ENCODE measurements at regions of chr2 and their contacts with region 1.

Region 1: GRCh38 chr2:200811336-200812121 is at the start of gene BZW1:
- DNase-seq: peak; percentile 99
- total RNA-seq, gene BZW1: 99.3 TPM

Region 2: DNA sequence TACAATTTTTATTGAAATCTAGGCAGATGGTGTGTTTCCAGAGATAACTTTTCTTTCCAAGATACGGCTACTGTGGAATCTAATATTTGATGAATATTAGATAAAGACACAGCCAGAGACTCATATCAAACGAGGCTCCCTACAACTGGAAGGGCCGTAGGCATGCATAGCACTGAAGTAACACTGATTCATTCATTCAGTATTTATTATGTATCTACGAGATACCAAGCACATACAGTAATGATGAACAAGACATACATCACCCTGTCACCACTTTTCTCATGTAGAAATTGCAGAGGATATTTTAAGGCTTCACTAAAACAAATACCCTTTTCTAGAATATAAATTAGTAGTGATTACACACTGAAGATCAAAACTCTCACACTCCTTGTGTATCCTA is 376.1 kb before region 1 on chr2:
- intact Hi-C with region 1: no loop called
- DNase-seq: no peak

Region 3: GRCh38 chr2:200713003-200713703 is 98.4 kb before region 1 on chr2:
- intact Hi-C with region 1: loop called (anchors 1 kb)
- DNase-seq: peak; percentile 93

Region 4: GRCh38 chr2:200742426-200742825 is 69.1 kb before region 1 on chr2:
- intact Hi-C with region 1: loop called (anchors 2 kb)
- DNase-seq: peak; percentile 82

Region 5: GRCh38 chr2:200864176-200864976 is 52.8 kb after region 1 on chr2 and contains the start of gene CLK1:
- intact Hi-C with region 1: loop called (anchors 1 kb)
- DNase-seq: peak; percentile 99
- total RNA-seq, gene CLK1: 58.3 TPM

Region 6: DNA sequence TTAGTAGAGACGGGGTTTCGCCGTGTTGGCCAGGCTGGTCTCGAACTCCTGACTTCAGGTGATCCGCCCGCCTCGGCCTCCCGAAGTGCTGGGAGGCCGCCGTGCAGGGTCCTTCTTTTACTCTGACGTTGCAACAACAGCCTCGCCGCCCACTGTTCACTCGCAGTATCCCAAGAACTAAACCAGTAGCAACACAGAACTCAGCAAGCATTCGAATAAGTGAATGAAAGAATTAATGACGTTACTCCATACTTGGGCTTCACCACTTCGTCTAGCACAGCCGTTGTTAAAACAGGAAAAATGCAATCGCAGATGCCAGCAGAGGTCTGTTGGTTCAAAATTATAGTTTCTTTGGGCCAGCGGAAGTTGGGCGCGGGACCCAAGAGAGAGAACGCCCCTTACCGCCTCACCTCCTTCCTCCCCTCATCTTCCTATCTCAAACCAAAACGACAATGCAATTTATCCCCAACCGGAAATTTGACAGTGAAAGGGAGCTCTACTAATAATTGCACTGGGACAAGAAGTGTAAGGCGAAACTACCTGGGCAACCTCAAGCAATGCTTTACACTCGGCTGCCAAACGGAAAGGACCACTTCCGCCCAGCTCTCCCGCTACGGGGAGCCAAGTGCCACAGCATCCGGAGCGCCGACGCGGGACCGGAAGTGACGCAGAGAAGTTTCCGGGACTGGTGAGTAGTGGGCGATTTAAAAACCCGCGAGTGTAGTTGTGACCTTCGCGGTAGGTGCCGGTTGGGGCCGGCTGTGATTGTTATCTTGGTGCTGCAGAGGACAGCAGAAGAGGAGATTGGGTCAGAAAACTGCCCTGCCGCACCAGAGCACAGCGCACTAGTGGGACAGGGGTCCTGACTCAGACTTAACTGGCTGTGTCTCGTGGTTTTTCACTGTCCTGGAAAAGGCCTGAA is 77.4 kb after region 1 on chr2 and contains the starts of genes NIF3L1 and PPIL3:
- intact Hi-C with region 1: loop called (anchors 1 kb)
- DNase-seq: peak; percentile 97
- total RNA-seq, gene NIF3L1: 19.1 TPM
- total RNA-seq, gene PPIL3: 19.4 TPM

Region 7: GRCh38 chr2:201116115-201116958 is 304.8 kb after region 1 on chr2 and contains the start of gene CFLAR:
- intact Hi-C with region 1: no loop called
- DNase-seq: peak; percentile 94
- total RNA-seq, gene CFLAR: 193 TPM

Region 8: DNA sequence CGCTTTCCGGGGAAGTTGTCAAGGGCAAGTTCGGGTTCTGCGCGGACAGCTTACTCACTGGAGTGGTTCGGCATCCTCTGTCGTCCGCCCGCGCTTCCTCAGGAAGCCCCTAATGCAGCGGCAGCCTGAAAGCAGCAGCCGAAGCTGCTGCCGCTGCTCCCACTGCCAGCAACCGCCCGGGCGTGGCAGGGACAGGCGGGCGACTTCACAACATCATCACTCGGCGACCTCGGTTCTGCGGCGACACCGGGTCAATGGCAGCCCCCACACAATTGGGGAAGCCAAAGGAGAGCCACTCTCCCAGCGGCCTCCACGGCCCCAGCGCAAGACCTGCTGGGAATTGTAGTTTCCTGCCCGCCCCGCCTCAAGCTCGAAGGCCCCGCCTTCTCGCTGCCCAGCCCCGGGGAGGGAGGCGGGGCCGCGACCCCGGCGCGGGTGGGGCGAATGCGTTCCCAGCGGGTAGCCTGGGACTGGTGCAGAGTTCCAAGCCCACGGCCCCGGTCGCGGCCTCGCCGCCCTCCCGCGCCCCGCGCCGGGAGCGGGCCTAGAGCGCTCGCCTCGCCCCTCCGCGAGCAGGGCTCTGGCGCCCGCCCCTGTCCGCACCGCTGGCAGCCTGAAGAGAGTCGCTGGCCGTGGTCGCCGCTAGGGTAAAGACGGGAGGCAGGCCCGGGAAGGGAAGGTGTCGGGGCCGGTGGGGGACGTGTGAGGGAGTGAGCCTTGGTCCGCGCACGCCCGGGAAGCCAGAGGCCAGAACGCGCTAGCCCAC is 639.9 kb after region 1 on chr2 and contains the starts of genes STRADB and TRAK2:
- intact Hi-C with region 1: loop called (anchors 5 kb)
- DNase-seq: peak; percentile 99
- total RNA-seq, gene STRADB: 41.5 TPM
- total RNA-seq, gene TRAK2: 259 TPM